B cell (primary cell): ENCODE measurements at regions of chr9 and their contacts with region 1.

Region 1: DNA sequence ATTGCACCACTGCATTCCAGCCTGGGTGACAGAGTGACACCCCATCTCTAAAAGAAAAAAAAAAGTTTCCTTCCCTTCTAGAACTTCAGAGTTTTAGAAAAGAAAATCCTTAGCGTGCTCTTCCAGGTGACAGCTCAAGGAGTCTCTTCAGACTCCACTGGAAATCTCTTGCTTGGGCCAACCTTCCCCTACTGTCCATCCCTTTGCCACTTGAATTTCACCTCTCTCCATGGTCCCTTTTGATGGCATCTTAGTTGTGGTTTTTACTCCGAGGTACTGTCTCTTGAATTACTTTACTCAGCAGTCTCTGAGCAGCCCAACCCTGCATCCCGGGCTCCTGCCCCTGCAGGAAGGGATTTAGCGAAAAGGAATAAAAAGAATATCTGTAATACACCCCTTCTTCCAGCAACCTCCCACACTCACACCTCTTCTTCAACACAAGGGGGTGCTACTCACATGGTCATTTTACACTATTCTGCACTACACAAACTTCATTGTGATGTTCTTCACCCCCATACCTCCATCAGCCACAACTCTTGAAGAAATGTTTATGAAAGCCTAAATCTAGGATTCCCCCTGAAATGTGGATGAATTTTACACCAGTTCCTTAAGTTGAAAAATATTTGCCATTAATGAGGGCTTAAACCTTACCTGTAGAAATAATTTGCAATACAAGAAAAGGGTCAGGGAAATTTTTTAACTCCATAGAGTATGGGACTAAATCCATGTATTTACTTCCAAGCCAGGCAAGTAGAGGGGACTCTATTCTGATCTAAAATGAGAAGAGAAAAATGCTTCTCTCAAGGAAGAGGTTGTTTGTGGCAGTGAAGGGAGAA is 25.9 kb downstream of the TPD52L3 start:
- DNase-seq: peak; percentile 76
- ATAC-seq: peak; percentile 89
- H3K4me3 ChIP-seq: no peak overlapping the region
- H3K4me3 Mint-ChIP-seq: no peak overlapping the region
- H3K27ac ChIP-seq: no peak overlapping the region
- H3K27ac Mint-ChIP-seq: no peak overlapping the region
- H3K4me1 ChIP-seq: peaks cover 0 to 4% of the 10 kb centered on the region in 2 donors
- H3K4me1 Mint-ChIP-seq: peaks cover 6% of the 10 kb centered on the region
- H3K27me3 ChIP-seq: peaks cover 0 to 5% (median 0%) of the 10 kb centered on the region in 4 experiments
- H3K27me3 Mint-ChIP-seq: peaks cover 11% of the 10 kb centered on the region
- CTCF ChIP-seq: peak; percentile 91

Region 2: DNA sequence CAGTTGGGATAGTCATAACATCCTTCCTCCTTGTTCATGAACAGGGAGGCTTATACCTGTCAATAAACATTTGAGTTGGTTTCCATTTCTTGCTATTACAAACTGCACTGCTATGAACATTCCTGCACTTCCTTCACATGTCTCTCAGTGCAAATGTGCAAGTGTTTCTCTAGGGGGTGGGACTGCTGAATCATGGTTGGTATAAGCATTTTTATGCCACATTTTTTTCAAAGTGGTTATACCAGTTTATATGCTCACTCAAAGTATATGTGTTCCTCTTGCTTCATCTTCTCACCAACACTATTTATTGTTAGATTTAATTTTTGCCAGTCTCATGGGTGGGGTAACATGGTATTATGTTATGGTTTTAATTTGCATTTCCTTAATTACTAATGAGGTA is 51.6 kb before region 1 on chr9:
- CTCF ChIA-PET with region 1: no interaction called
- POLR2A ChIA-PET with region 1: no interaction called
- intact Hi-C with region 1: no loop called
- DNase-seq: no peak
- ATAC-seq: no peak
- H3K4me3 ChIP-seq: no peak overlapping the region
- H3K4me3 Mint-ChIP-seq: no peak overlapping the region
- H3K27ac ChIP-seq: no peak overlapping the region
- H3K27ac Mint-ChIP-seq: no peak overlapping the region
- H3K4me1 ChIP-seq: no peaks in the 10 kb centered on the region
- H3K4me1 Mint-ChIP-seq: no peaks in the 10 kb centered on the region
- H3K27me3 ChIP-seq: no peaks in the 10 kb centered on the region
- H3K27me3 Mint-ChIP-seq: peaks cover 15% of the 10 kb centered on the region
- CTCF ChIP-seq: no peak

Region 3: GRCh38 chr9:6367128-6367890 is 13.2 kb after region 1 on chr9:
- CTCF ChIA-PET with region 1: interaction called, 13 read pairs
- POLR2A ChIA-PET with region 1: no interaction called
- intact Hi-C with region 1: no loop called
- DNase-seq: no peak
- ATAC-seq: no peak
- H3K4me3 ChIP-seq: no peak overlapping the region
- H3K4me3 Mint-ChIP-seq: no peak overlapping the region
- H3K27ac ChIP-seq: no peak overlapping the region
- H3K27ac Mint-ChIP-seq: no peak overlapping the region
- H3K4me1 ChIP-seq: no peaks in the 10 kb centered on the region
- H3K4me1 Mint-ChIP-seq: no peaks in the 10 kb centered on the region
- H3K27me3 ChIP-seq: peaks cover 0 to 3% (median 0%) of the 10 kb centered on the region in 4 experiments
- H3K27me3 Mint-ChIP-seq: no peaks in the 10 kb centered on the region
- CTCF ChIP-seq: no peak

Region 4: GRCh38 chr9:6412487-6413364 is 58.7 kb after region 1 on chr9 and contains the start of gene UHRF2:
- CTCF ChIA-PET with region 1: interaction called, 12 read pairs
- POLR2A ChIA-PET with region 1: interaction called, 3 read pairs
- intact Hi-C with region 1: loop called (anchors 2 kb)
- DNase-seq: peak; percentile 100
- ATAC-seq: peak; percentile 87
- H3K4me3 ChIP-seq: peak within 1 kb of the TSS; percentile 72 to 89 (median 87)
- H3K4me3 Mint-ChIP-seq: peak within 1 kb of the TSS; percentile 88
- H3K27ac ChIP-seq: peak within 1 kb of the TSS; percentile 95 to 97
- H3K27ac Mint-ChIP-seq: peak within 1 kb of the TSS; percentile 98
- H3K4me1 ChIP-seq: peaks cover 61 to 62% of the 10 kb centered on the region in 2 donors
- H3K4me1 Mint-ChIP-seq: peaks cover 58% of the 10 kb centered on the region
- H3K27me3 ChIP-seq: no peaks in the 10 kb centered on the region
- H3K27me3 Mint-ChIP-seq: no peaks in the 10 kb centered on the region
- CTCF ChIP-seq: no peak
- total RNA-seq, gene UHRF2: 153 and 171 TPM in 2 replicates

Region 5: DNA sequence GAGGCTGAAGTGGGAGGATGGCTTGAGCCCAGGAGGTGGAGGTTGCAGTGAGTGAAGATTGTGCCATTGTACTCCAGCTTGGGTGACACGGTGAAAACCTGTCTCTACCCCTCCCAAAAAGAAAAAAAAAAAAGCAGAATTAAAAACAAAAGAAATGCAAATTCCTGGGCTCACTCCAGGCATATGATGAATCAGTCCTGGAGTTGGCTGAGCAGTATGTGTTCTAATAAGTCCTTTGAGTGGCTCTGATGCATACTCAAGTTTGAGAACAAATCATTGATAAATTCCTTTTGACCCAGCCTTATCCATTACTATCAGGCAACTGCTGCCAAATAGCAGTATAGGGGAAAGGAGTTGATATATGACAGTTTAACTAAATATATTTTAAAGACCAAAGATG is 87.2 kb after region 1 on chr9:
- CTCF ChIA-PET with region 1: interaction called, 13 read pairs
- POLR2A ChIA-PET with region 1: no interaction called
- intact Hi-C with region 1: no loop called
- DNase-seq: no peak
- ATAC-seq: no peak
- H3K4me3 ChIP-seq: no peak overlapping the region
- H3K4me3 Mint-ChIP-seq: no peak overlapping the region
- H3K27ac ChIP-seq: no peak overlapping the region
- H3K27ac Mint-ChIP-seq: no peak overlapping the region
- H3K4me1 ChIP-seq: peaks cover 29 to 42% of the 10 kb centered on the region in 2 donors
- H3K4me1 Mint-ChIP-seq: peaks cover 71% of the 10 kb centered on the region
- H3K27me3 ChIP-seq: no peaks in the 10 kb centered on the region
- H3K27me3 Mint-ChIP-seq: no peaks in the 10 kb centered on the region
- CTCF ChIP-seq: no peak

Region 6: GRCh38 chr9:6488395-6488794 is 134.3 kb after region 1 on chr9:
- CTCF ChIA-PET with region 1: interaction called, 16 read pairs
- POLR2A ChIA-PET with region 1: interaction called, 9 read pairs
- intact Hi-C with region 1: loop called (anchors 2 kb)
- DNase-seq: no peak
- ATAC-seq: no peak
- H3K4me3 ChIP-seq: no peak overlapping the region
- H3K4me3 Mint-ChIP-seq: no peak overlapping the region
- H3K27ac ChIP-seq: no peak overlapping the region
- H3K27ac Mint-ChIP-seq: no peak overlapping the region
- H3K4me1 ChIP-seq: no peaks in the 10 kb centered on the region
- H3K4me1 Mint-ChIP-seq: peaks cover 3% of the 10 kb centered on the region
- H3K27me3 ChIP-seq: no peaks in the 10 kb centered on the region
- H3K27me3 Mint-ChIP-seq: no peaks in the 10 kb centered on the region
- CTCF ChIP-seq: no peak

Region 7: DNA sequence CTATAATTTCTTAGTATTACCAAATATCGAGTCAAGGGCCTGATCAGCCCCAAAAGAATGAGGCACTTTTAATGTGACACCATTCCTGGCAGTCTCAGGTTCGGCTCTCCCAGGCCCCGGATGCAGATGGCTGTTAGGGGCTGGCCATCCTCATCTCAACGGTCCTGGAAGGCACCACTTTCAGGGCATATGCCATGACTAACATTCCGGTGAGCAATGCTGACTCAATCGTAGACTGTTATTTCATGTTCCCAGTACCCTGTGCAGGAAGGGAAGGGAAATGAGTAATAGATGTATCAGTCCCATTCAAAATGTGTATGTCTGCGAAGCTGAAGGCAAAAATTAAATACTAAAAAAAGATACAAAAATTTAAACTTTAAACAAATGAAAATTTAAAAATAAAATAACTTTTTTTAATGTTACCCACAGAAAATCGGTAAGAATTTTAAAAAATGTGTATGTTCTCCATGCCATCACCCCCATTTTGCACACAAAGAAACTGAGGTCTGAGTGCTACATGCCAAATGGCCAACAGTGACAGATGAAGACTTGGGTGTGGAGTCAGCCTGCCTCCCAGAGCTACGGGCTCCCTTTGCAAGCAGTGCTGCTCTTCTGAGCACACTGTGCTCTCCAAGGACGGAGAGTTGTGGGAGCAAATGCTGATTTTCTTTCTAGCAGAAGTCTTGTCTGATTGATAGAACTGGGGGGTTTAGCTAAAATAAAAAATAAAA is 212.5 kb after region 1 on chr9:
- CTCF ChIA-PET with region 1: interaction called, 164 read pairs
- POLR2A ChIA-PET with region 1: no interaction called
- intact Hi-C with region 1: loop called (anchors 1 kb)
- DNase-seq: no peak
- ATAC-seq: no peak
- H3K4me3 ChIP-seq: no peak overlapping the region
- H3K4me3 Mint-ChIP-seq: no peak overlapping the region
- H3K27ac ChIP-seq: no peak overlapping the region
- H3K27ac Mint-ChIP-seq: no peak overlapping the region
- H3K4me1 ChIP-seq: no peaks in the 10 kb centered on the region
- H3K4me1 Mint-ChIP-seq: no peaks in the 10 kb centered on the region
- H3K27me3 ChIP-seq: no peaks in the 10 kb centered on the region
- H3K27me3 Mint-ChIP-seq: peaks cover 4% of the 10 kb centered on the region
- CTCF ChIP-seq: no peak

Region 8: GRCh38 chr9:6667633-6668280 is 313.7 kb after region 1 on chr9:
- CTCF ChIA-PET with region 1: interaction called, 15 read pairs
- POLR2A ChIA-PET with region 1: no interaction called
- intact Hi-C with region 1: no loop called
- DNase-seq: peak; percentile 59
- ATAC-seq: peak; percentile 33
- H3K4me3 ChIP-seq: no peak overlapping the region
- H3K4me3 Mint-ChIP-seq: no peak overlapping the region
- H3K27ac ChIP-seq: no peak overlapping the region
- H3K27ac Mint-ChIP-seq: no peak overlapping the region
- H3K4me1 ChIP-seq: no peaks in the 10 kb centered on the region
- H3K4me1 Mint-ChIP-seq: peaks cover 4% of the 10 kb centered on the region
- H3K27me3 ChIP-seq: no peaks in the 10 kb centered on the region
- H3K27me3 Mint-ChIP-seq: no peaks in the 10 kb centered on the region
- CTCF ChIP-seq: peak; percentile 75